ENCODE measurements at regions of chr1 and their contacts with region 1.

Region 1: DNA sequence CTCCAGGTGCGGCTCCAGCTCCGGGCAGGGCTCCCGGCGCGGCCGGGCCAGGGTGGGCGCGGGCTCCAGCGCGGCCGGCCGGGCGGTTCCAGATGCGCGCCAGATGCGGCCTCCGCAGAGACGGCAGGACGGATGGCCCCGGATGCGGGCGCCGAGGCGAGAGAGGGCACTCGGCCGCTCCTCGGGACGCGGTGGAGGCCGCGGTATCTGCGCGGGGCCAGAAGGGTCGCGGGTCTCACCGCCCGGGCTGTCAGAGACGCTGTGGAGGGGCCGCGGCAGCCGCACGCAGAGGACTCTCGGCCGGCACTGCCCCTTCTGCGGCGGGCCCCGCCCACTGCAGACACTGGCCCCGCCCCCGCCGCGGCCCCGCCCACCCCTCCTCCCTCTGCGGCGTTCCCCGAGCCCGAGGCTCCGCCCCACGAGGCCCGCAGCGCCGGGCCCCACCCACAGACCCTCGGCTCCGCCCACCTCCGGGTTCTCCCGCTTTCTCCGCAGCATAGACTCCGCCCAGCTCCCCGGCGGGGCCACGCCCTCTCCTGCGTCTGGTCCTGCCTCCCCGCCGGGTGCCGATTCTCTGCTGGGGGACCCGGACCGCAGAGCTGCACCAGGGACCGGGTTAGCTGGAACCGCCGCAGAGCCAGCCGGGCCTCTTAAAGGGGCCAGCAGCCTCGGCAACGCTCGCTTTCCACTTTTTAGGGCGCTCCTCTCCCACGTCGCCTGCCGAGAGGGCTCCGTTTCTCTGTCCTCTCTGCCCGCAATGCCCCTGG is at the start of gene IFFO2:
- DNase-seq: peak; percentile 98 to 99
- H3K4me3 ChIP-seq: peak within 1 kb of the TSS; percentile 72 to 95 (median 81)
- H3K27ac ChIP-seq: peak within 1 kb of the TSS; percentile 74 to 92 (median 79)
- H3K4me1 ChIP-seq: peaks cover 21 to 53% (median 43%) of the 10 kb centered on the region in 4 donors
- H3K27me3 ChIP-seq: no peaks in the 10 kb centered on the region
- CTCF ChIP-seq: no peak
- EP300 ChIP-seq: no peak
- POLR2A ChIP-seq: peak in 1 of 4 donors; percentile 40
- total RNA-seq, gene IFFO2: 0.58 to 47.8 (median 7.7) TPM

Region 2: DNA sequence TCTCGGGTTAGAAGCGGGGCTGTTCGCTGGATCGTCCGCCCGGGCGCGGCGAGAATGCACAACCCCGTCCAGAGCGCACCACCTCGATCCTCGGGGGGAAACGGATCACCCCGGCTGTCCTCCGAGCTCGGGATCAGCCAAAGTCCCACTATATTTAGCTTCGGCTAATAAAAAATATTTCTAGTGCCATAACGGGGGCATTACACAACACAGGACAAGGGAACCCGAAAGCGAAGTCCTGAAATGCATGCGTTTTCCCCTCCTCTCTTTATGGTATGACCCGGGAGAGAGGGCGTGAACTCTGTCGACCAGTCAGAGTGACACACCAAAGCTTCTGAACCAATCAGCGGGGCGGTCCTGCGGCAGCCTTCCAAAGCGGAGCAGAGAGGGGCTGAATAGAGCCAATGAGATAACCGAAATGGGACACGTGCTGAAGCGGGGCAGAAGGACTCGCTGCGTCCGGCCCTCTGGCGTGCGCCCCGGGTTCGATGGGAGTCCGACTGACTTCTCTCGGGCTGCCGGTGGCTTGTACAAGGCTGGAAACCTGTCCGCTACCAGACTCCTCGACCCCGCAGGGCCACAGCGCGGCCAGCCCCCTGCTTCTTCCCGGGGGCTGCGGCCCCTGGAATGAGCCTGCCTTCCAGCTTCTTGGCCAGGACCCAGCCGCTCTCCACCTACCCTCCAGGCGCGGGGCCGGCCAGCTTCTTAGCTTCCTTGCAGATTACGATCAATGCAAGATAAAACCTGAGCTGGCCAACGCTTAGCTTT is 53.8 kb before region 1 on chr1 and contains the start of gene ALDH4A1:
- intact Hi-C with region 1: loop called (anchors 10 kb)
- DNase-seq: peak; percentile 98 to 99
- H3K4me3 ChIP-seq: peak within 1 kb of the TSS; percentile 74 to 93 (median 78)
- H3K27ac ChIP-seq: peak within 1 kb of the TSS; percentile 90 to 96 (median 93)
- H3K4me1 ChIP-seq: peaks cover 14 to 39% (median 32%) of the 10 kb centered on the region in 4 donors
- H3K27me3 ChIP-seq: no peaks in the 10 kb centered on the region
- CTCF ChIP-seq: peak in 1 of 7 experiments; percentile 14
- EP300 ChIP-seq: no peak
- POLR2A ChIP-seq: no peak
- total RNA-seq, gene ALDH4A1: 3.5 to 11.0 (median 7.6) TPM

Region 3: GRCh38 chr1:18989176-18989809 is 32.7 kb after region 1 on chr1:
- intact Hi-C with region 1: no loop called
- DNase-seq: no peak
- H3K4me3 ChIP-seq: no peak overlapping the region
- H3K27ac ChIP-seq: no peak overlapping the region
- H3K4me1 ChIP-seq: no peaks in the 10 kb centered on the region
- H3K27me3 ChIP-seq: peaks cover 0 to 9% (median 0%) of the 10 kb centered on the region in 3 donors
- CTCF ChIP-seq: no peak
- EP300 ChIP-seq: no peak
- POLR2A ChIP-seq: no peak

Region 4: DNA sequence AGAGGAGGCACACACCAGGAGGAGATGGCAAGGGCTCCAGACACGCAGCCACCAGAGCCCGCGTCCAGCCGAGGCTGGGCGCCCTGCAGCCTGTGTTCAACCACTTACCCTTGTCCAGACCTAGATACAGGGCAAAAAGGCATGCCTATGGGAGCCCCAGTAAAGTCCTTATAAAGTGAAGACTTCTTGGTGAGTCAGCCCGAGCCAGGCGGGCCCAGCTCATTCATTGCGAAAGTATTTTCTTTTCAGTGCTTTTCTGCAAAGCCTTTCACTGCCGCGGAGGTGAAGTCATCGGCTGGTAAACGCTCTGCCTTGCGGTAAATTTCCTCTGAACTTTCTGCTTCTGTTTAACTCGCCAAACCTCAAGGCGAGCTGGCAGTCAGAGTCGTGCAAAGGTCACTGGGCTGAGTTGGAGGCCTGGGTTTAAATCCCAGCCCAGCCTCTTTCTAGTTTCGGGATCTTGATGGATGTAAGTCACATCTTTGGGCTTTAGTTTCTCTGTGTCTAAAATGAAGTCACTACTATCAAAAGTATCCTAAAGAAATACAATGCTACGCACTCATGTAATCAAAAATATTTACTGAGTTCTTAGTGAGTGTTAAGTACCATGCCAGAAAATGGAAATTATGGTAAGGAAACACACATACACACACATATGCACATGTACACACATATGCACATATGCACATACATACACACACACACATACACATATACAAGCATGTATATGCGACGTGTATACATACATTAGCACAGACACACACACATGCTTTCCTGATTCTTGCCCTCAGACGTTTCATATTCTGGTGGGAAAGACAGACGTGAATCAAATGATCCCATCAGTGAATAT is 54.7 kb after region 1 on chr1:
- intact Hi-C with region 1: no loop called
- DNase-seq: peak; percentile 87 to 94
- H3K4me3 ChIP-seq: peak overlapping the region in 2 of 4 donors; percentile 2 to 25
- H3K27ac ChIP-seq: peak overlapping the region; percentile 81 to 90 (median 88)
- H3K4me1 ChIP-seq: peaks cover 46 to 62% (median 55%) of the 10 kb centered on the region in 4 donors
- H3K27me3 ChIP-seq: no peaks in the 10 kb centered on the region
- CTCF ChIP-seq: no peak
- EP300 ChIP-seq: no peak
- POLR2A ChIP-seq: no peak

Region 5: DNA sequence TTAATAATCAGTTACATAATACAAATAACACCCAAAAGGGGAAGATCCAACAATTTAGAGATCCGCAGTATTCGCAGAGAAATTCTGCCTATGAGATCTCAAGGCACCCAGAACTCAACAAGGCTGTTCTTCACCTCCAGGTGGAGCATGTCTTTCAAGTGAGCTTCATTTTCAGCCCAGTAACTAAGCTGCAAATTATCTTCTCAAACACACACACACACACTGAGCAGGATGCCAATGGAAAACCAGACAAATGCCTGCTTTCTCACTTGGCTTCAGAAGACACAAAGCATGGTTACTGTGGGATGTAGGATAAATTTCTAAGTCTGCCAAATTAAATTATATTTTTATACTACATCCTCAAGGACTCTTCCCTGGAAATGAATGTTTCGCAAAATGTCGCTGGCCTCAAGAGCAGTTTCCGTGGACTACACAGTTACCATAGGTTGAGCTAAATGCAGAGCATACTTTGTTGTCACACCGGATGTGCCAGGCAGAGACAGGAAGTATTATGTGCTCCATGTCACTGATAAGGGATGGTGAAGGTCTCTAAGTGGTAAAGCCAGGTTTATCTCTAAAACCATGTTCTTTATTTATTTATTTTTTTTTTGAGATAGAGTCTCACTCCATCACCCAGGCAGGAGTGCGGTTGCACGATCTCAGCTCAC is 223.2 kb after region 1 on chr1:
- intact Hi-C with region 1: no loop called
- DNase-seq: peak in 1 of 2 donors; percentile 70
- H3K4me3 ChIP-seq: no peak overlapping the region
- H3K27ac ChIP-seq: no peak overlapping the region
- H3K4me1 ChIP-seq: no peaks in the 10 kb centered on the region
- H3K27me3 ChIP-seq: no peaks in the 10 kb centered on the region
- CTCF ChIP-seq: peak in 2 of 7 experiments; percentile 13 to 33
- EP300 ChIP-seq: no peak
- POLR2A ChIP-seq: no peak